ENCODE measurements at regions of chr7 and their contacts with region 1.

Region 1: DNA sequence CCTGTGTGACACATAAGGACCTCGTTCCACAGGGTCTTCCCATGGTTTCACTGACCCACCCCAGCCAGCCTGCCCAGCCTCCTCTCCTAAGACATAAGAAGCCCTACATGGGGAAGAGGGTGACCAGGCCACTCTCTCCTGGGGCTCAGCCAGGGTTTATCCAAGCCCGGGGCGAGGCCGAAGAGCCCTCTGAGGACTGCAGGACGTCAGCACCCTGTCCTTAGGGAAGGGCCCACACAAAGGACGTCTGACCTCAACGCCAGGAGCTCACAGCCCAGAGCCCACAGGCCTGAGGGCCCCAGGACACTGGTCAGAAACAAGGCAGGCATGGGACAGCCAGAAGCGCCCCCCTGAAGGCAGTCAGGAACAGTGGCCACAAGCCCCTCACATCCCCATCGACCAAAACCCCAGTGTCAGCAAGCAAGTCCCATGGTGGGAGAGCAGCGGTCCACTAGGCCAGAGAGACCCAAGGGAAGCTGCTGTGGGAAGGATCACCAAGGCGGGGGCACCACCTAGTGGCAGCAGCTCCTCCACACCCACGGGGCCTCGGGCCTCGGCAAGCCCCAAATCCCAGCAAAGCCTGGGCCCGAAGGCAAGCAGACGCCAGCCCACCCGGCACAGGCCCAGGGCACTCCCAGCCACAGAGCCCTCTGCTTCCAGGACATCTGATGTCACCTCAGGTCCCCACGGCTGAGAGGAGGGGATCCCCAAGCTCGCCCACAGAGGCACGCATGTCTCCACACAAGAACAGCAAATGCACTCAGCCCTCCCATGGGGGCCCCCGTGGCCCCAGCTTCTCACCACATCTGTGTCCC is 23.4 kb downstream of the MAD1L1 start:
- DNase-seq: peak; percentile 39
- H3K4me3 ChIP-seq: no peak overlapping the region
- H3K27ac ChIP-seq: no peak overlapping the region
- H3K4me1 ChIP-seq: no peaks in the 10 kb centered on the region
- H3K27me3 ChIP-seq: no peaks in the 10 kb centered on the region
- CTCF ChIP-seq: peak; percentile 38

Region 2: GRCh38 chr7:1569833-1570633 is 639.3 kb before region 1 on chr7 and contains the start of gene PSMG3:
- intact Hi-C with region 1: loop called (anchors 10 kb)
- DNase-seq: peak; percentile 90
- H3K4me3 ChIP-seq: peak within 1 kb of the TSS; percentile 77
- H3K27ac ChIP-seq: peak within 1 kb of the TSS; percentile 96
- H3K4me1 ChIP-seq: peaks cover 11% of the 10 kb centered on the region
- H3K27me3 ChIP-seq: no peaks in the 10 kb centered on the region
- CTCF ChIP-seq: no peak
- total RNA-seq, gene PSMG3: 28.7 to 45.8 TPM

Region 3: DNA sequence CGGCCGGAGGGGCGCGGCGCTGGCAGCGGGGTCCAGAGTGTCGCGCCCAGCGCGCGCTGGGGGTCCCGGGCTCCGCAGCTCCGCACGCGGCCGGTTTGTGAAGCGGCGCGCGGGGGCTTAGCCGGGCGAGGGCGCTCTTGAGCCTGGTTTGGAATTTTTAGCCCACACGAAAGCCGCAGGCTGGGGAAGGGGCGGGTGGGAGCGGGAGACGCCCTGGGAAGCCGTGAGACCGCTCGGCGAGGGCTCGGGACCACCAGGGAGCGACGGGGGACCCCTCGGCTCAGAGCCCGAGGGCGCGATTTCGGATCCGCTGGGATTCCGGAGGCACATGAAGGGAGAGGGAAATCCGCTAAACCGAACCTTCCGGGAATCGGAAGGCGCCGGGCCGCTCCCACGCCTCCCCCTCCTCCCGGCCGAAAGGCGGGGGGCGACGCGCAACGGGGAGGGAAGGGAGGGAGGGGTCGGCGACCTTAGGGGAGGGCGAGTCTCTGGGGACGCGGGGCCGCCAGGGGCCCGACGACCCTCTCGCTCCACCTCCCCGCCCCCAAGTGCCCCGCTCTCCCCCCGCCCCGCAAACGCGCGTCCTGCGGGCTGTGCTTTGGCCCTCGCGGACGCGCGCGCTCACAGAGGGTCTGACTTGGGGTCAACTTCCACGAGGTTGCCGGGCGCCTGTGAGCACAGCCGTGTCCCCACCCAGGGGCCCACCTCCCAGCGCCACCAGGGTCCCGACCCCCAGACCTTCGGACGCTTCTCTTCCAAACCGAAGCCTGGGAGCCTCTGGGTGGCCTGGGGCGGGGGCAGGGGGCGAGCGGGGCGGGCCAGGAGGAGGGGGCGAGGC is 544.4 kb before region 1 on chr7:
- intact Hi-C with region 1: loop called (anchors 5 kb)
- DNase-seq: peak; percentile 50
- H3K4me3 ChIP-seq: peak overlapping the region; percentile 37
- H3K27ac ChIP-seq: no peak overlapping the region
- H3K4me1 ChIP-seq: peaks cover 16% of the 10 kb centered on the region
- H3K27me3 ChIP-seq: peaks cover 60% of the 10 kb centered on the region
- CTCF ChIP-seq: peak; percentile 51

Region 4: DNA sequence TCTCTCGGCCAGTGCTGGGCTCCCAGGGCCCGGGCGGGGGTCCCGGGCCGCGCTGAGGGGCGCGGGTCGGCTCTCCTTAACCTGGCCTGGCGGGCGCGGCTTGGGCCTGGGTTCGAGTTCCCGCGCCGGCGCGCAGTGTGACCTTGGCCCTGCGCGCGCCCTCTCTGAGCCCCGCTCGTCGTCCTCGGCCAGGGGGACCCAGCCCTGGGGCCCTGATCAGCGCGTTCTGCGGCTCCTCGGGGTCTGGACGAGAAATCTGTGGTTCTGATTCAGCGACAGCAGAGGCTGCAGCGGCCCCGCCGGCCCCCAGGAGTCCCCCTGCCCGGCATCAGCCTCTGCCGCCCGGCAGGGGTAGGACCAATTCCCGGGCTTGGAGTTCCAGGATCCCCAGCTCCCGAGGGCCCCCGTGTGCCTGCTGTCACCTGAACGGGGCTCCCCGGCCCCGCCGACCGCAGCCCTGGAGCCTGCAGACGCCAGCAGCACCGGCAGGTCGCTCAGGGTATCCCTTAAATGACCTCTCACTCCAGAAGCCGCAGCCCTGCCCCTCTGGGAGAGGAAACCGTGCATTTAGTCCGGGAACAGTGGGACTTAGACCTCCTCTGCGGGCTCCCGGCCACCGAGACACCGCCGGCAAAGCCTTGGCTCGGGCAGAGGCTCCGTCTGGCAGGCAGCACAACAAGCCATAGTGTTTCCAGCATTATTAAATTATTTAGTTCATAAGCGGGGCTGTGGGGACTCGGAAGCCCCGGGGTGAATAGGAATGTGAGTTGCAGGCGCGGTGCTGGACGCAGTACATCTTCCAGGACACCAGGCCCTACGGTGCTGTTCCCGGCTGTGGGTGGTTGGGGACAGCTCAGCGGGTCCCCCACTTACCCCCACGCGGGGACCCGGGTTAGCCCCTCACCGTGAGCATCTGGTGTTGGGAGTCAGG is 194.6 kb after region 1 on chr7:
- intact Hi-C with region 1: no loop called
- DNase-seq: peak; percentile 42
- H3K4me3 ChIP-seq: peak overlapping the region; percentile 87
- H3K27ac ChIP-seq: peak overlapping the region; percentile 22
- H3K4me1 ChIP-seq: peaks cover 7% of the 10 kb centered on the region
- H3K27me3 ChIP-seq: no peaks in the 10 kb centered on the region
- CTCF ChIP-seq: no peak